ENCODE measurements at regions of chr15 and their contacts with region 1.

Region 1: GRCh38 chr15:81274931-81275707 is 48.8 kb downstream of the STARD5 start:
- DNase-seq: peak; percentile 74 to 80 (median 78)
- H3K4me3 ChIP-seq: no peak overlapping the region
- H3K4me3 Mint-ChIP-seq: peak overlapping the region in 7 of 8 donors; percentile 12 to 75 (median 30)
- H3K27ac ChIP-seq: no peak overlapping the region
- H3K27ac Mint-ChIP-seq: peak overlapping the region; percentile 2 to 92 (median 70)
- H3K4me1 ChIP-seq: peaks cover 18% of the 10 kb centered on the region
- H3K4me1 Mint-ChIP-seq: peaks cover 17 to 42% (median 30%) of the 10 kb centered on the region in 4 donors
- H3K27me3 ChIP-seq: no peaks in the 10 kb centered on the region
- H3K27me3 Mint-ChIP-seq: no peaks in the 10 kb centered on the region

Region 2: GRCh38 chr15:81001152-81002000 is 273.7 kb before region 1 on chr15:
- CTCF ChIA-PET with region 1: no interaction called
- POLR2A ChIA-PET with region 1: no interaction called
- intact Hi-C with region 1: no loop called
- DNase-seq: peak; percentile 44 to 75 (median 48)
- H3K4me3 ChIP-seq: peak overlapping the region in 1 of 2 donors; percentile 91
- H3K4me3 Mint-ChIP-seq: peak overlapping the region; percentile 67 to 98 (median 96)
- H3K27ac ChIP-seq: peak overlapping the region; percentile 95
- H3K27ac Mint-ChIP-seq: peak overlapping the region in 6 of 7 donors; percentile 80 to 99 (median 92)
- H3K4me1 ChIP-seq: peaks cover 42% of the 10 kb centered on the region
- H3K4me1 Mint-ChIP-seq: peaks cover 37 to 66% (median 48%) of the 10 kb centered on the region in 4 donors
- H3K27me3 ChIP-seq: no peaks in the 10 kb centered on the region
- H3K27me3 Mint-ChIP-seq: peaks cover 0 to 1% of the 10 kb centered on the region in 2 donors

Region 3: DNA sequence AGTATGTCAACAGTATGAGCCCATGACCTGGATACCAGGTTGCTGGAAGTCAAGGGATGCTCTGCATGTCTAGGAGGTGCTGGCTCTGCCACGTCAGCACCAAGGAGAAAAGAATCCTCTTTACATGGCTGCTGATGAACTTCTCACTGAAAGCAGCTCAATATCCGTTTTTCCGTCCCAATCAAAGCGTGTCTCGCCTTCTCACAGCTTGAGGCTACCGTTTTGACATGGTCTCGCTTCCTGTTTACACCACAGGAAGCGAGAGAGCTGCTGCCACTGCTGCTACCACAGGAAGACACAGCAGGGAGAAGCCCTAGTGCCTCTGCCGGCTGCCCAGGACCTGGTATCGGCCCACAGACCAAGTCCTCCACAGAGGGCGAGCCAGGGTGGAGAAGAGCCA is 21.6 kb after region 1 on chr15:
- CTCF ChIA-PET with region 1: interaction called, 107 read pairs
- POLR2A ChIA-PET with region 1: interaction called, 294 read pairs
- intact Hi-C with region 1: loop called (anchors 1 kb)
- DNase-seq: peak; percentile 79 to 89 (median 84)
- H3K4me3 ChIP-seq: peak overlapping the region; percentile 77 to 87
- H3K4me3 Mint-ChIP-seq: peak overlapping the region; percentile 98 to 100 (median 100)
- H3K27ac ChIP-seq: peak overlapping the region; percentile 91
- H3K27ac Mint-ChIP-seq: peak overlapping the region; percentile 96 to 99 (median 98)
- H3K4me1 ChIP-seq: peaks cover 60% of the 10 kb centered on the region
- H3K4me1 Mint-ChIP-seq: peaks cover 48 to 82% (median 55%) of the 10 kb centered on the region in 4 donors
- H3K27me3 ChIP-seq: no peaks in the 10 kb centered on the region
- H3K27me3 Mint-ChIP-seq: no peaks in the 10 kb centered on the region

Region 4: GRCh38 chr15:81312790-81313543 is 37.8 kb after region 1 on chr15:
- CTCF ChIA-PET with region 1: interaction called, 35 read pairs
- POLR2A ChIA-PET with region 1: interaction called, 43 read pairs
- intact Hi-C with region 1: no loop called
- DNase-seq: no peak
- H3K4me3 ChIP-seq: no peak overlapping the region
- H3K4me3 Mint-ChIP-seq: no peak overlapping the region
- H3K27ac ChIP-seq: no peak overlapping the region
- H3K27ac Mint-ChIP-seq: peak overlapping the region in 5 of 7 donors; percentile 26 to 97 (median 83)
- H3K4me1 ChIP-seq: peaks cover 54% of the 10 kb centered on the region
- H3K4me1 Mint-ChIP-seq: peaks cover 43 to 77% (median 64%) of the 10 kb centered on the region in 4 donors
- H3K27me3 ChIP-seq: no peaks in the 10 kb centered on the region
- H3K27me3 Mint-ChIP-seq: no peaks in the 10 kb centered on the region

Region 5: GRCh38 chr15:81336568-81336967 is 61.4 kb after region 1 on chr15:
- CTCF ChIA-PET with region 1: interaction called, 142 read pairs
- POLR2A ChIA-PET with region 1: interaction called, 4 read pairs
- intact Hi-C with region 1: loop called (anchors 1 kb)
- DNase-seq: peak in 4 of 5 donors; percentile 31 to 54 (median 40)
- H3K4me3 ChIP-seq: no peak overlapping the region
- H3K4me3 Mint-ChIP-seq: peak overlapping the region in 1 of 8 donors; percentile 17
- H3K27ac ChIP-seq: no peak overlapping the region
- H3K27ac Mint-ChIP-seq: peak overlapping the region in 2 of 7 donors; percentile 28 to 77
- H3K4me1 ChIP-seq: no peaks in the 10 kb centered on the region
- H3K4me1 Mint-ChIP-seq: peaks cover 0 to 7% (median 2%) of the 10 kb centered on the region in 4 donors
- H3K27me3 ChIP-seq: no peaks in the 10 kb centered on the region
- H3K27me3 Mint-ChIP-seq: peaks cover 0 to 2% of the 10 kb centered on the region in 2 donors

Region 6: DNA sequence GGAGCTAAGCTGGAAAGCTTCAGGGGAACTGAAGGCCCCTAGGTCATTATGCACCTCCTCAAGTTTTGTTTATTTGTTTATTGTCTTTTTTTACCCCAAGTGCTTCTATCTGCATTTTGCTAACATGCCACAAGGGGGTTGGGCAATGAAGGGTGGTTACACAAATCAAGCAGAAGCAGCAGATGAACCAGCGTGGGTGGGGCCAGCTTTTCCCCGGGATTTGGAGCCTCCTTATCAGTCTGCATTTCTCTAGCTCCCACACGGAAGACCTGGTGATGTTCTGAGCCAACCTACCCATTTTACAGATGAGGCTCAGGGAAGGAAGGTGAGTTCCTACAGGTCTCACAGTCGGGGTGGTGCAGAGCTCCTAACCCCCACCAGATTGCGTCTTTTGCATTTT is 82.1 kb after region 1 on chr15:
- CTCF ChIA-PET with region 1: interaction called, 15 read pairs
- POLR2A ChIA-PET with region 1: no interaction called
- intact Hi-C with region 1: no loop called
- DNase-seq: no peak
- H3K4me3 ChIP-seq: no peak overlapping the region
- H3K4me3 Mint-ChIP-seq: peak overlapping the region in 1 of 8 donors; percentile 3
- H3K27ac ChIP-seq: no peak overlapping the region
- H3K27ac Mint-ChIP-seq: no peak overlapping the region
- H3K4me1 ChIP-seq: no peaks in the 10 kb centered on the region
- H3K4me1 Mint-ChIP-seq: no peaks in the 10 kb centered on the region
- H3K27me3 ChIP-seq: no peaks in the 10 kb centered on the region
- H3K27me3 Mint-ChIP-seq: peaks cover 3 to 7% of the 10 kb centered on the region in 2 donors

Region 7: DNA sequence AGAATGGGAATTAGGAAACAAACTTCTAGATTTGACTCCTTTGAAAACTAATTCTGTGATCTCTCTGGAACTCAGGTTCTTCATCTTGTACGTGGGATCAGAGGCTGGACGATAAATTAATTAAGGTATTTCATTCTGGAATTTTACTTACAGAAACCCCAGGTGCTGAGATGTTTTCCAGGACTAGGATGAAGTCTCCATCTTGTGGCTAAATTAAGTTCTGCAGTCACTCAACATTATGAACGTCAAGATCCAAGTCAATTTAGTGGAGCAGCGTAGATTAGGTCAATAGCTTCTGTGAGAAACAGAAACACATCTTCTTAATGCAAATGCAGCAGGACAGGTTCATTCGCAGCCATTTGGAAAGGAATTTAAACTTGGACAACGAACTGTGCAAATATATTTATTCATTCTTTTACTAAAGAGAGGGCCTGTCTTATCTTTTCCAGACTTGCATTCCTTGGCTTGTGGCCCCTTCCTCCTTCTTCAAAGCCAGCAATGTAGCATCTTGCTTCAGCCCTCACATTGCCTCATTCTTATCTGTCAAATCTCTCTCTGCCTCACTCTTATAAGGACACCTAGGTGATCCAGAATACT is 125.6 kb after region 1 on chr15:
- CTCF ChIA-PET with region 1: interaction called, 147 read pairs
- POLR2A ChIA-PET with region 1: interaction called, 7 read pairs
- intact Hi-C with region 1: no loop called
- DNase-seq: peak in 4 of 5 donors; percentile 42 to 57 (median 48)
- H3K4me3 ChIP-seq: no peak overlapping the region
- H3K4me3 Mint-ChIP-seq: no peak overlapping the region
- H3K27ac ChIP-seq: no peak overlapping the region
- H3K27ac Mint-ChIP-seq: no peak overlapping the region
- H3K4me1 ChIP-seq: no peaks in the 10 kb centered on the region
- H3K4me1 Mint-ChIP-seq: peaks cover 0 to 4% (median 3%) of the 10 kb centered on the region in 4 donors
- H3K27me3 ChIP-seq: peaks cover 5% of the 10 kb centered on the region
- H3K27me3 Mint-ChIP-seq: peaks cover 5 to 7% of the 10 kb centered on the region in 2 donors

Region 8: GRCh38 chr15:81480645-81481053 is 205.5 kb after region 1 on chr15:
- CTCF ChIA-PET with region 1: interaction called, 4 read pairs
- POLR2A ChIA-PET with region 1: no interaction called
- intact Hi-C with region 1: loop called (anchors 2 kb)
- DNase-seq: peak in 4 of 5 donors; percentile 37 to 47 (median 44)
- H3K4me3 ChIP-seq: no peak overlapping the region
- H3K4me3 Mint-ChIP-seq: peak overlapping the region in 4 of 8 donors; percentile 18 to 61 (median 42)
- H3K27ac ChIP-seq: no peak overlapping the region
- H3K27ac Mint-ChIP-seq: no peak overlapping the region
- H3K4me1 ChIP-seq: no peaks in the 10 kb centered on the region
- H3K4me1 Mint-ChIP-seq: no peaks in the 10 kb centered on the region
- H3K27me3 ChIP-seq: no peaks in the 10 kb centered on the region
- H3K27me3 Mint-ChIP-seq: peaks cover 5% of the 10 kb centered on the region in 2 donors